ENCODE measurements at regions of chr14 and their contacts with region 1.

Region 1: GRCh38 chr14:60184146-60184904 is 19.1 kb upstream of the DHRS7 start:
- DNase-seq: no peak
- ATAC-seq: peak; percentile 59
- H3K4me3 Mint-ChIP-seq: peak overlapping the region; percentile 67
- H3K27ac Mint-ChIP-seq: peak overlapping the region; percentile 73
- H3K4me1 Mint-ChIP-seq: peaks cover 13% of the 10 kb centered on the region
- H3K27me3 Mint-ChIP-seq: no peaks in the 10 kb centered on the region

Region 2: DNA sequence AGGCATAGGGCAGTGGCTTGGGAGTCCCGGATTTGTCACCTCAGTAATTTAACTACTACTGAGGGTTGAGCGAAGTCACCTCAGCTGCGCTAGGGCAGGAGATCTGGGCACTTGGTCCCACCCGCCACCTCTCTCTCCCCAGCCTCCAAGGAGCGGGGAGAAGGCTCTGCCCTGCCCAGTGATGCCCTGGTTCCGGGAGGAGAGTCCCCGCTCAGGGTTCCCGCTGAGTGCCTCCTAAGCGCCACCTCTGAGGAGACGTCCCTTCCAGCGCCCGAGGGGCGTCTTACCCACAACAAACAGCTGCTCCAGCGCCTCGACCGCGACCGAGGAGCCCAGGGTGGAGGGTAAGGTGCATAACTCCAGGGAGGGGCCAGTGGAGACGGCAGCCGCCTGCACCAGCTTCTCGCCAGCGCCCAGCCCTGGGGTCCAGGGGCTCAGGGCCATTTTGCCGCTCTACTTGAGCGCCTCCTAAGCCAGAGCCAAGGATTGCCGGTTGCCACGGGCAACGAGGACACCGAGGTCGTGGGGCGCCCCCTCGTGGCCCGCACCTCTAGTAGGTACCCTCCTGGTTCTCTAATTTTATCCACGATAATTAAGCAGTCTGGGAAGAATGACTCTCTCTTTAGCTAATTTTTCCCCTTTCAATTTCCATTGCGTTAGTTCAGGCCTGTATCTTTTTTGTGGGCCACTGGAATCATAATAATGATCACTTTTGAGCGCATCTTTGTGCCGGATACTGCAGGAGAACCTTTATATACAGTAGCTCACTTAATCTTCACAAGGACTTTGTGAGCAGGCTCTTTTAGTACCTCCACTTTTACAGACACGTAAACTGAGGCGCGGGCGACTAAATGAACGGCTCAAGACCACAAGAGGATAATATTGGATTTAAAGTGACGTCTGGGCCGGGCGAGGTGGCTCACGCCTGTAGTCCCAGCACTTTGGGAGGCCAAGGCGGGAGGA is 607.7 kb before region 1 on chr14 and contains the start of gene CCDC175:
- CTCF ChIA-PET with region 1: interaction called, 12 read pairs
- DNase-seq: peak; percentile 88
- ATAC-seq: peak; percentile 96
- H3K4me3 Mint-ChIP-seq: peak within 1 kb of the TSS; percentile 64
- H3K27ac Mint-ChIP-seq: no peak within 1 kb of the TSS
- H3K4me1 Mint-ChIP-seq: peaks cover 9% of the 10 kb centered on the region
- H3K27me3 Mint-ChIP-seq: peaks cover 20% of the 10 kb centered on the region
- total RNA-seq, gene CCDC175: not detected

Region 3: GRCh38 chr14:60064491-60065072 is 119.7 kb before region 1 on chr14:
- CTCF ChIA-PET with region 1: interaction called, 44 read pairs
- DNase-seq: no peak
- ATAC-seq: peak; percentile 45
- H3K4me3 Mint-ChIP-seq: no peak overlapping the region
- H3K27ac Mint-ChIP-seq: no peak overlapping the region
- H3K4me1 Mint-ChIP-seq: no peaks in the 10 kb centered on the region
- H3K27me3 Mint-ChIP-seq: peaks cover 17% of the 10 kb centered on the region

Region 4: GRCh38 chr14:60164712-60165546 is 19.4 kb before region 1 on chr14 and contains the start of gene DHRS7:
- CTCF ChIA-PET with region 1: interaction called, 29 read pairs
- DNase-seq: peak; percentile 81
- ATAC-seq: peak; percentile 94
- H3K4me3 Mint-ChIP-seq: peak within 1 kb of the TSS; percentile 91
- H3K27ac Mint-ChIP-seq: peak within 1 kb of the TSS; percentile 96
- H3K4me1 Mint-ChIP-seq: peaks cover 43% of the 10 kb centered on the region
- H3K27me3 Mint-ChIP-seq: no peaks in the 10 kb centered on the region
- total RNA-seq, gene DHRS7: 62.8 to 68.0 TPM

Region 5: DNA sequence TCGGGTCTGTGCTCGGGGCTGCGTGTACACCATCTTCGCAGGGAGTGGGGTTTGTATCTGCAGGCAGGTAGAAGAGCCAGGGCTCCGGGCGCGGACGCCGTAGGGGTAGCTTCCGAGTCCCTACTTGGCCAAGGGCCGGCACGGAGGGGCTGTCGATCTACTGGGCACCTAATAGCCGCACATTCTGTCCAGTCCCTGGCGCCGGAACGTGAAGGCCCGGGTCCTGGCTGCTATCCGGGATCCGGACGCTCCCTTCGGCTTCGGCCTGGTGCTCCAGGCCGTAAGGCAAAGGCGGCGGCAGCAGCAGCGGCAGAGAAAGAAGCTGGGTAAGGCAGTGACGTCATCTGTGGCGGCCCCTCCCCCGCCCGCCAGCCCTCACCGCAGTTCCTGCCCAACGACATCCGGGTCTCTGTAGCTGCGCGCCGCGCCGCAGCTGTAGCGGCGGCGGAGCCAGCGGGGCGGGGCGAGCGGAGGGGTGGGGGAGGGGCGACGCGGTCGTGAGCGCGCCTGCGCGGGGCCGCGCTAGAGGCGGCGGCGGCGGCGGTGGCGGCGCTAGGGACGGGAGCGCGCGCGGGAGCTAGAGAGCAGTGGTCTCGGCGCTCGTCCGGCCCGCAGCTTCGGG is 64.5 kb after region 1 on chr14 and contains the start of gene PPM1A:
- CTCF ChIA-PET with region 1: interaction called, 15 read pairs
- DNase-seq: peak; percentile 95
- ATAC-seq: peak; percentile 76
- H3K4me3 Mint-ChIP-seq: peak within 1 kb of the TSS; percentile 86
- H3K27ac Mint-ChIP-seq: peak within 1 kb of the TSS; percentile 99
- H3K4me1 Mint-ChIP-seq: peaks cover 46% of the 10 kb centered on the region
- H3K27me3 Mint-ChIP-seq: no peaks in the 10 kb centered on the region
- total RNA-seq, gene PPM1A: 44.0 to 54.6 TPM

Region 6: GRCh38 chr14:60381909-60382308 is 197.6 kb after region 1 on chr14:
- CTCF ChIA-PET with region 1: no interaction called
- DNase-seq: no peak
- ATAC-seq: no peak
- H3K4me3 Mint-ChIP-seq: no peak overlapping the region
- H3K27ac Mint-ChIP-seq: no peak overlapping the region
- H3K4me1 Mint-ChIP-seq: no peaks in the 10 kb centered on the region
- H3K27me3 Mint-ChIP-seq: peaks cover 4% of the 10 kb centered on the region

Measured in activated CD8-positive, alpha-beta memory T cell treated with anti-CD3 and anti-CD28 coated beads, Interleukin-2, amount 10 ng/mL, durations not matched to agents 7 days and 5 days (primary cell).